ENCODE measurements at regions of chr1 and their contacts with region 1.

Region 1: GRCh38 chr1:183837062-183837461 is 32.1 kb downstream of the RGL1 start:
- DNase-seq: no peak
- H3K4me3 ChIP-seq: no peak overlapping the region
- H3K27ac ChIP-seq: no peak overlapping the region
- H3K4me1 ChIP-seq: peaks cover 4% of the 10 kb centered on the region
- H3K27me3 ChIP-seq: peaks cover 3% of the 10 kb centered on the region
- CTCF ChIP-seq: no peak

Region 2: DNA sequence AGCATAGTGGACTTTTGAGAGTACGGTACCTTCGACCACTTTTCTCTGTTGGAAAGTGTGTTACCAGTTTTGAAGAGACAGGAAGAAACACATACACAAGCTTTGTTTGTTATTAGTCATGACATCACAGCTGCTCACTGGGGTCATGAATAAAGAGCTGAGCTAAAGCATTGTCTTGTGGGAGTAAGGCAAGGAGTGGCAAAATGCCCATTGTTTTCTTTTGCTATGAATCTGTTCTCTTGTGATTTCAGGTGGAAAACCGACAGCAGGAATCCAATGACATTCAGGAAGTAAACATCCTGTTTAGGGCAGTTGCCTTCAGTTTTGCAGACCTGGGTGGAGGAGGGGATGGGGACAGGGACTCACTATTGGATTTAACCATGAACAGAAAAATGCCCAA is 34.1 kb after region 1 on chr1:
- CTCF ChIA-PET with region 1: no interaction called
- dilution Hi-C with region 1: loop called (anchors 5 kb)
- in situ Hi-C with region 1: no loop called
- intact Hi-C with region 1: no loop called
- DNase-seq: peak; percentile 38
- H3K4me3 ChIP-seq: no peak overlapping the region
- H3K27ac ChIP-seq: no peak overlapping the region
- H3K4me1 ChIP-seq: no peaks in the 10 kb centered on the region
- H3K27me3 ChIP-seq: no peaks in the 10 kb centered on the region
- CTCF ChIP-seq: no peak

Region 3: GRCh38 chr1:183881387-183882131 is 44.5 kb after region 1 on chr1:
- CTCF ChIA-PET with region 1: no interaction called
- dilution Hi-C with region 1: no loop called
- in situ Hi-C with region 1: no loop called
- intact Hi-C with region 1: no loop called
- DNase-seq: peak; percentile 63
- H3K4me3 ChIP-seq: no peak overlapping the region
- H3K27ac ChIP-seq: no peak overlapping the region
- H3K4me1 ChIP-seq: peaks cover 25% of the 10 kb centered on the region
- H3K27me3 ChIP-seq: no peaks in the 10 kb centered on the region
- CTCF ChIP-seq: no peak